ENCODE measurements at regions of chr3 and their contacts with region 1.

Region 1: DNA sequence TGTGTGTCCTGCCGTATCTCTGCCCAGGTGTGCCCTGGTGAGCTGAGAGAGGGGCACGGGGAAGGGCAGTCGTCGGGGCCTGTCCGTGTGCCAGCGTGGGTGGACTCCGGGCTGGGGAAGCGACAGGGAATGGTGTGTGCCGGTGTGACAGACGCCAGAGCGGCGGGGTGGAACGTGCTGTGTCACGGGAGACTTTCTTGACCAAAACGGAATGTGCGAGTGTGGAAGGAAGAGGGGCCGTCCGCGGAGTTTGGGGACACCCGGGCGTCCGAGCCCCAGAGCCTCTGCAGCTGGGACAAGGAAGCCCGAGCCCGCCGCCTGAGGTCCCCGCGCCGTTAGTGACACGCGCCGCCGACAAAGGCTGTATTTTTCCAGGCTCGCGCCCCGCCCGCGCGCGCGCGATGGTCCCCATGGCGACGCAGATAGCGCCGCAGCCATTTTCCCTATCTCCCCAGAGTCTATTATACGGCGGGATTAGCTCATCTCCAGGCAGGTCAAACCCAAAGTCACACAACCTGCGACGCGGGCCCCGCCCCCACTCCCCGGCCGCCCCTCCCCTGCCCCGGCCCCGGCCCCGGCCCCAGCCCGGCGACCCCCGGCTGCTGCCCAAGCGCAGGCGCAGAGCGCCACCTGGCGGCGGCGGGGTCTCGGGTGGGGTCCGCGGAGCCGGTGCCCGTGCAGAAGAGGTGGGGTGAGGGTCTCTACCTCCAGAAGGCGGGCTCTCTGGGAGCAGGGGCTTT is 4.6 kb upstream of the GATA2 start:
- DNase-seq: peak; percentile 62
- ATAC-seq: peak; percentile 49
- H3K4me3 ChIP-seq: peak overlapping the region; percentile 65
- H3K27ac ChIP-seq: no peak overlapping the region
- H3K4me1 ChIP-seq: no peaks in the 10 kb centered on the region; the same call in 1 of the 2 replicates
- H3K27me3 ChIP-seq: no peaks in the 10 kb centered on the region
- CTCF ChIP-seq: peak; percentile 59

Region 2: GRCh38 chr3:128095222-128095703 is 402.3 kb before region 1 on chr3:
- CTCF ChIA-PET with region 1: no interaction called
- POLR2A ChIA-PET with region 1: no interaction called
- intact Hi-C with region 1: loop called (anchors 5 kb)
- DNase-seq: peak; percentile 70
- ATAC-seq: peak; percentile 97
- H3K4me3 ChIP-seq: no peak overlapping the region
- H3K27ac ChIP-seq: no peak overlapping the region
- H3K4me1 ChIP-seq: peaks cover 6% of the 10 kb centered on the region
- H3K27me3 ChIP-seq: no peaks in the 10 kb centered on the region
- CTCF ChIP-seq: peak; percentile 77

Region 3: DNA sequence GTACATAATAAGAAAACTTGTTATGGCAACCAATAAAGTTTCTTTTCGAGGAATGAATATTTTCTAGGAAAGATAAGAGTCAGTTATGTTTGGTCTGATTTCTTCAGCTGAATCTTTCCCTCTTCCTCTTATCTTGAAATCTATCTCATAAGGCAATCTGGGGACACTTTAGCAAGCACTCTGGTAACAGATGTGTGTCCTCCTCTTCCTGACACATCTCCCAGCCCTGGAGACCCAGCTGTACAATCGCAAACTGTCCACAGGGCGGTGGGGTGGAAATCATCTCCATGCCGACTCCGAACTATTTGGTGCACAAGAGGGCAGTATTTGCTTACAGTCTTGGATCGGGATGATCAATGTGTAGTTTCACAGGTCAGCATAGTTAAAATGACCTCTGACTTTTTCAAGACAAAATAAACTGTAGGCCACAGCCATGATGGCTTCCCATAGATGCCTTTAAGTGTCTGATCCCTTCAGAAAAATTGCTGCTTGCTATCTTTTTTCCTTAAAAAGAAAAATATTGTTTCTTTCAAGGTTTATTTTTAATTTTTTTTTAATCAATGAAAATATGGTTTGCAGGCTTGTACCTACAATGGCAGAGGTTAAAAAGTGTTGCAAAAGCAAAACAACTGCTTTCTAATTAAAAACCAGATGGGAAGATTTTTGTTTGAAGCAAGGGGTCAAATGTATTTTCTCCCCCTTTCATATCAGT is 326.6 kb before region 1 on chr3:
- CTCF ChIA-PET with region 1: no interaction called
- POLR2A ChIA-PET with region 1: no interaction called
- intact Hi-C with region 1: loop called (anchors 2 kb)
- DNase-seq: peak; percentile 73
- ATAC-seq: peak; percentile 97
- H3K4me3 ChIP-seq: no peak overlapping the region
- H3K27ac ChIP-seq: no peak overlapping the region
- H3K4me1 ChIP-seq: no peaks in the 10 kb centered on the region
- H3K27me3 ChIP-seq: no peaks in the 10 kb centered on the region
- CTCF ChIP-seq: peak; percentile 79

Region 4: DNA sequence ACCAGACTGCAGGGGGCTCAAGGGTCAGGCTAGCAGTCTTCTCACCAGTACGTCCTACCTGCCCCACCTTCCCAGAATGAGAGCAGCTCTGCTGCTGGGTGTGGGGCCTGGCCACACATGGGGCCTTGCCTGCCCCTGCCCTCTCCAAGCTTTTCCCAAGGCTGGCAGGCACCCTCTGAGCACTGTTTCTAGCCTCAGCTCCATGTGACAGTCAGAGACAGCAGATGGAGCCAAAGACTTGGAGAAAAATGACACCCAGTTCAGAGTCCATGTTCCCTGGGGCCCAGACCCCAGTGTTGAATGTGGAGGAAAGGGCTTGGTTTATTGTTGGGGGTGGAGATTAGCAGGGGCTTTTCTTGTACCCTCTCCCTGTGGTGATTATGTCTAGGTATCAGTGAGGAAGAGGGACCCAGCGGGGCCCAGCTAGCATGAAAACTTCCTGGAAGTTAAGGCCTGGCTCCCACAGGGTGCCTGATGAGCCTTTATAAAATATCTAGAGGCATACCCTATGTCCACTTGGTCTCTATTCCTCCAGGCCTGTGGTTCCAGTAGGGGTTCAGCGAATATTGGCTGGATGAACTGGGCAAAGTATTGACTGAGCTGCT is 190.4 kb before region 1 on chr3:
- CTCF ChIA-PET with region 1: no interaction called
- POLR2A ChIA-PET with region 1: no interaction called
- intact Hi-C with region 1: loop called (anchors 5 kb)
- DNase-seq: peak; percentile 7
- ATAC-seq: peak; percentile 48
- H3K4me3 ChIP-seq: no peak overlapping the region
- H3K27ac ChIP-seq: no peak overlapping the region
- H3K4me1 ChIP-seq: no peaks in the 10 kb centered on the region
- H3K27me3 ChIP-seq: no peaks in the 10 kb centered on the region
- CTCF ChIP-seq: peak; percentile 37

Region 5: GRCh38 chr3:128701342-128702212 is 204.0 kb after region 1 on chr3:
- CTCF ChIA-PET with region 1: no interaction called
- POLR2A ChIA-PET with region 1: no interaction called
- intact Hi-C with region 1: no loop called
- DNase-seq: no peak
- ATAC-seq: no peak
- H3K4me3 ChIP-seq: no peak overlapping the region
- H3K27ac ChIP-seq: no peak overlapping the region
- H3K4me1 ChIP-seq: no peaks in the 10 kb centered on the region
- H3K27me3 ChIP-seq: no peaks in the 10 kb centered on the region
- CTCF ChIP-seq: no peak

Measured in PC-3 (cell line).